Activated CD4-positive, alpha-beta T cell treated with anti-CD3 and anti-CD28 coated beads, Interleukin-2, amount 10 ng/mL, durations not matched to agents 24 days and 14 days (primary cell): ENCODE measurements at regions of chr16 and their contacts with region 1.

Region 1: GRCh38 chr16:57091975-57092785 is at the start of gene CPNE2:
- DNase-seq: no peak
- H3K4me3 Mint-ChIP-seq: peak within 1 kb of the TSS; percentile 84
- H3K27ac Mint-ChIP-seq: peak within 1 kb of the TSS; percentile 73
- H3K4me1 Mint-ChIP-seq: peaks cover 9% of the 10 kb centered on the region
- H3K27me3 Mint-ChIP-seq: peaks cover 24% of the 10 kb centered on the region
- total RNA-seq, gene CPNE2: 6.3 and 6.4 TPM in 2 replicates

Region 2: GRCh38 chr16:57029161-57030160 is 62.7 kb before region 1 on chr16:
- intact Hi-C with region 1: no loop called
- DNase-seq: no peak
- H3K4me3 Mint-ChIP-seq: no peak overlapping the region
- H3K27ac Mint-ChIP-seq: peak overlapping the region; percentile 62
- H3K4me1 Mint-ChIP-seq: peaks cover 37% of the 10 kb centered on the region
- H3K27me3 Mint-ChIP-seq: no peaks in the 10 kb centered on the region

Region 3: DNA sequence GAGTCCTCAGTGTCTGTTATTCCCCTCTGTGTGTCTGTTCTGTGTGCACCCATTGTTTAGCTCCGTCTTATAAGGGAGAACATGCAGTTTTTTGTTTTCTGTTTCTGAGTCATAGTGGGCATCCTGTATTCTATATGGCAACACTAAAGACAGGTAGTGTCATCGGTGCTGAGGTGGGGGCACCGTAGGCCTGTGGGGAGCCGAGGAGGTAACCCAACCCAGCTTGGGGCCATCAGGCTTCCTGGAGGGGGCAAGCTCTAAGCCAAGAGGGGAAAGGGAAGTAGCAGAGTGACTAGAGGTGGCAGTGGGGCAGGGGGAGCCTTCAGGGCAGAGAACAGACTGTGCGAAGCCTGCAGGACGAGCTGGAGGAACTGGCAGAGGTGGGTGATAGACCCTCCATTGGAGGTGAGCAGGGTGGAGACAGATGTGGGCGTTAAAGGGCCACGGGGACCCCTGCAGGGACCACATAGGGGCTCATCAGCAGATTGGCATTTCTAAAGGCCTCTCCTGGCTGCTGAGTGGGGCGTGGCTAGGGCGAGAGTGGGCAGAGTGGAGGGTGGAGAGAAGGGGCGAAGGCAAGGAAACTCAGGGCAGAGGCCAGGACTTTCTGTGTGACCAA is 36.7 kb after region 1 on chr16:
- intact Hi-C with region 1: loop called (anchors 5 kb)
- DNase-seq: peak; percentile 78
- H3K4me3 Mint-ChIP-seq: peak overlapping the region; percentile 52
- H3K27ac Mint-ChIP-seq: peak overlapping the region; percentile 86
- H3K4me1 Mint-ChIP-seq: peaks cover 58% of the 10 kb centered on the region
- H3K27me3 Mint-ChIP-seq: no peaks in the 10 kb centered on the region